ENCODE measurements at regions of chr20 and their contacts with region 1.

Region 1: GRCh38 chr20:8389381-8390036 is 257.4 kb downstream of the PLCB1 start:
- DNase-seq: no peak
- ATAC-seq: peak in 3 of 4 donors; percentile 43 to 61 (median 58)
- H3K4me3 ChIP-seq: peak overlapping the region in 1 of 12 donors; percentile 12
- H3K27ac ChIP-seq: peak overlapping the region in 5 of 12 donors; percentile 16 to 57 (median 48)
- H3K4me1 ChIP-seq: peaks cover 0 to 41% (median 13%) of the 10 kb centered on the region in 12 donors
- H3K27me3 ChIP-seq: no peaks in the 10 kb centered on the region
- CTCF ChIP-seq: peak; percentile 48 to 74 (median 63)
- POLR2A ChIP-seq: no peak

Region 2: GRCh38 chr20:7935027-7935551 is 454.4 kb before region 1 on chr20:
- intact Hi-C with region 1: loop called in 1 of 10 experiments (anchors 10 kb)
- DNase-seq: no peak
- ATAC-seq: no peak
- H3K4me3 ChIP-seq: no peak overlapping the region
- H3K27ac ChIP-seq: no peak overlapping the region
- H3K4me1 ChIP-seq: peaks cover 0 to 4% (median 0%) of the 10 kb centered on the region in 12 donors
- H3K27me3 ChIP-seq: peaks cover 0 to 8% (median 0%) of the 10 kb centered on the region in 9 donors
- CTCF ChIP-seq: no peak
- POLR2A ChIP-seq: no peak

Region 3: DNA sequence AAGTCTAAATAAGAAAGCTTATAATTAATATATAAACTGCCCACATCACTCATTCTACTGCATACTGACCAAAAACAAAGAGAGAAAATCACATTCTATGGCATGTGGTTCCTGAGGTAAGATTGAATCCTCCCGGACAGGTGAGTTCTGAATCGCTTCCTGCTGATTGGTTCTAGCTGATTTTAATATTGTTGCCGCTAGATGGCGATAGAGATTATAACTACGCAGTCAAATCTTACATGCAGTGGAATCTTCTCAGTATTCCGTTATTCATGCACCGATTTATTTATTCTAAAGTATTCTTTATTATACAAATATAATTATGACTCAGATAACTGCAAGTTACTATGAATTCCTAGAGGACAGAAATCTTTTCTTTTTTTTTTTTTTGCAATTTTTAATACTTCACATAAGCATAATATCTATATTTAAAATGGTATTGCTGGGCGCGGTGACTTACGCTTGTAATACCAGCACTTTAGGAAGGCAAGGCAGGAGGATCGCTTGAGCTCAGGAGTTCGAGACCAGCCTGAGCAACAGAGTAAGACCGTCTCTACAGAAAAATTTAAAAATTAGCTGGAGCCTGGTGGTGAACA is 345.7 kb before region 1 on chr20:
- intact Hi-C with region 1: loop called in 9 of 10 experiments (anchors 1 to 10 kb)
- DNase-seq: peak in 1 of 5 donors; percentile 30
- ATAC-seq: peak in 2 of 4 donors; percentile 64 to 68
- H3K4me3 ChIP-seq: no peak overlapping the region
- H3K27ac ChIP-seq: no peak overlapping the region
- H3K4me1 ChIP-seq: peaks cover 0 to 2% (median 0%) of the 10 kb centered on the region in 12 donors
- H3K27me3 ChIP-seq: peaks cover 0 to 7% (median 0%) of the 10 kb centered on the region in 9 donors
- CTCF ChIP-seq: peak; percentile 61 to 87 (median 80)
- POLR2A ChIP-seq: no peak

Region 4: DNA sequence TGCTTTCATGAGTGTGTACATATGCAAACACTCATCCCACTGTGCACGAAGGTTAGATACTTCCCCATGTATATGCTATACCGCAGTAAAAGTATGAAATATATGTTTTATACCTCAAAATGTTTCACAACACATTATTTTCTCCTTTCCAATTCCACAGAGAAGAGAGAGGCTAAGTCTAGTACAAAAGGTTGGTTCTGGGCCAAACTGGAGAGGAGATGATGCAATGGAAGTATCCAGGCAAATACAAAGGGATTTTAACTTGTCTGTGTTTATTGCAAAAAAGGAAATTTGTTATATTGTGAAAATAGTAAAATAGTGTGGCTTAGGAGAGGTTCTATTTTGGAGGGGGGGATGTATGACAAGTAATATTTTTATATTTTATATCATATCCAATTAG is 144.9 kb before region 1 on chr20:
- intact Hi-C with region 1: loop called in 1 of 10 experiments (anchors 10 kb)
- DNase-seq: peak in 4 of 5 donors; percentile 25 to 57 (median 33)
- ATAC-seq: peak; percentile 49 to 85 (median 72)
- H3K4me3 ChIP-seq: no peak overlapping the region
- H3K27ac ChIP-seq: peak overlapping the region in 8 of 12 donors; percentile 21 to 55 (median 42)
- H3K4me1 ChIP-seq: peaks cover 0 to 39% (median 25%) of the 10 kb centered on the region in 12 donors
- H3K27me3 ChIP-seq: no peaks in the 10 kb centered on the region
- CTCF ChIP-seq: no peak
- POLR2A ChIP-seq: no peak

Region 5: DNA sequence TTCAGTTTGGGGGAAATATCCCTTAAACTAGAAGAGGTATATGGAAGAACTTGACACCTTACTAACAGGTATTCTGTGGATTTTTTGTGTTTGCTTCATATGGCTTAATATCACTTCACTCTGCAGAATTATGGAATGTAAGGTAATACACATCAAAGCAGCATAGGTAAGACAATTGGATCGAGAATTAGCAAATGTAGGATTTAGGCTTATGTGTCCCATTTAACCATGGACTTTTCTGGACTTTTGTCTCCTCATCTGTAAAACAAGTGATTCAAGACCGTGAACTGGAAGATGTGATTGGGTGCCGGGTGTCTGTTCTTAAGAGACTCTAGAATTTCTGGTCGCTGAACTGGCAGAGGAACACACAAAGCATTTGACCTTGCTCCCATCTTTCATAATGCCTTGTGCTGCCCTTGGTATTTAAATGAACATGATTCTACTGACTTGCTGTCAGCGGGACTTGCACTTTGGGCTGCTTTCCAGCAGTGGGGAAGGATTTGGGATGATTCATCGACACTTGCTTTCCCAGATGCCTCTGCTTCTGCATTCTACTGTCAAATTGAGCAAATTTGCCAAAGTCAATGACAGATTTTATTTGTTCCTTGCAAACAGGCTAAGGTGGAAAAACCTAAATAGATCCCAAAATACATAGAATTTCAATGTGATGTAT is 57.6 kb before region 1 on chr20:
- intact Hi-C with region 1: no loop called
- DNase-seq: peak in 2 of 5 donors; percentile 40 to 43
- ATAC-seq: peak in 1 of 4 donors; percentile 28
- H3K4me3 ChIP-seq: no peak overlapping the region
- H3K27ac ChIP-seq: no peak overlapping the region
- H3K4me1 ChIP-seq: peaks cover 0 to 7% (median 0%) of the 10 kb centered on the region in 12 donors
- H3K27me3 ChIP-seq: no peaks in the 10 kb centered on the region
- CTCF ChIP-seq: no peak
- POLR2A ChIP-seq: no peak

Region 6: GRCh38 chr20:8431538-8432434 is 42.3 kb after region 1 on chr20:
- intact Hi-C with region 1: no loop called
- DNase-seq: peak; percentile 77 to 84 (median 81)
- ATAC-seq: peak; percentile 62 to 90 (median 82)
- H3K4me3 ChIP-seq: peak overlapping the region in 7 of 12 donors; percentile 8 to 31 (median 15)
- H3K27ac ChIP-seq: peak overlapping the region in 11 of 12 donors; percentile 38 to 79 (median 65)
- H3K4me1 ChIP-seq: peaks cover 3 to 79% (median 25%) of the 10 kb centered on the region in 12 donors
- H3K27me3 ChIP-seq: no peaks in the 10 kb centered on the region
- CTCF ChIP-seq: no peak
- POLR2A ChIP-seq: no peak

Region 7: GRCh38 chr20:8535403-8536261 is 146.1 kb after region 1 on chr20:
- intact Hi-C with region 1: loop called in 1 of 10 experiments (anchors 10 kb)
- DNase-seq: no peak
- ATAC-seq: no peak
- H3K4me3 ChIP-seq: no peak overlapping the region
- H3K27ac ChIP-seq: no peak overlapping the region
- H3K4me1 ChIP-seq: peaks cover 0 to 11% (median 0%) of the 10 kb centered on the region in 12 donors
- H3K27me3 ChIP-seq: no peaks in the 10 kb centered on the region
- CTCF ChIP-seq: peak in 11 of 12 donors; percentile 10 to 46 (median 37)
- POLR2A ChIP-seq: no peak

Region 8: DNA sequence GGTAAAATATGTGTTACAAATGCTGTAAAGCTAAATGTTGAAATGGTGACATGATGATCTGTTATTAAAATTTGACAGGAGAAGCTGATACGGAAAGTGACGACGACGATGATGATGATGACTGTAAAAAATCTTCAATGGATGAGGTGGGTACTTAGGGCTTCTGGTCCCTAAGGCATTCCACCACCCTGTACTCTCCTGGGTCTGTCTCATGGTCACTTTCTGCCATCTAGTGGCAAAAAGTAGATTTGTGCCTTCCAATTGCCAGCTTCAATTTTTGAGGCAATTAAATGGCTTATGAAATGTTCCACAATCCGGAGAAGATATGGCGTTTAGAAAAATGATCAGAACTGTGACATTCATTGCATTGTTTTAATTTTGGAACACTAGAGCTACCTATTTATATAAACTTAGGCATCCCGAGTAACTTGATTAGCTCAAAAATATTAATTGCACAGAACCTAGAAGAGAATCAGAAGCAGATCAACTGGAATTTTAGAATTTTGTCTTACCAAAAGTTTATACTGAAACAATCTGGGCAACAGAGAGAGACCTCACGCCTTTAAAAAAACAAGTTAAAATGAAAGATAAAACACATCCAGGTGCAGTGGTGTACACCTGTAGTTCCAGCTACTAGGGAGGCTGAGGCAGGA is 332.9 kb after region 1 on chr20:
- intact Hi-C with region 1: loop called in 9 of 10 experiments (anchors 2 to 10 kb)
- DNase-seq: peak in 2 of 5 donors; percentile 26 to 27
- ATAC-seq: peak; percentile 53 to 86 (median 81)
- H3K4me3 ChIP-seq: no peak overlapping the region
- H3K27ac ChIP-seq: no peak overlapping the region
- H3K4me1 ChIP-seq: peaks cover 0 to 2% (median 0%) of the 10 kb centered on the region in 12 donors
- H3K27me3 ChIP-seq: no peaks in the 10 kb centered on the region
- CTCF ChIP-seq: peak; percentile 64 to 87 (median 80)
- POLR2A ChIP-seq: no peak